Caco-2 (cell line): ENCODE measurements at regions of chr10 and their contacts with region 1.

Region 1: DNA sequence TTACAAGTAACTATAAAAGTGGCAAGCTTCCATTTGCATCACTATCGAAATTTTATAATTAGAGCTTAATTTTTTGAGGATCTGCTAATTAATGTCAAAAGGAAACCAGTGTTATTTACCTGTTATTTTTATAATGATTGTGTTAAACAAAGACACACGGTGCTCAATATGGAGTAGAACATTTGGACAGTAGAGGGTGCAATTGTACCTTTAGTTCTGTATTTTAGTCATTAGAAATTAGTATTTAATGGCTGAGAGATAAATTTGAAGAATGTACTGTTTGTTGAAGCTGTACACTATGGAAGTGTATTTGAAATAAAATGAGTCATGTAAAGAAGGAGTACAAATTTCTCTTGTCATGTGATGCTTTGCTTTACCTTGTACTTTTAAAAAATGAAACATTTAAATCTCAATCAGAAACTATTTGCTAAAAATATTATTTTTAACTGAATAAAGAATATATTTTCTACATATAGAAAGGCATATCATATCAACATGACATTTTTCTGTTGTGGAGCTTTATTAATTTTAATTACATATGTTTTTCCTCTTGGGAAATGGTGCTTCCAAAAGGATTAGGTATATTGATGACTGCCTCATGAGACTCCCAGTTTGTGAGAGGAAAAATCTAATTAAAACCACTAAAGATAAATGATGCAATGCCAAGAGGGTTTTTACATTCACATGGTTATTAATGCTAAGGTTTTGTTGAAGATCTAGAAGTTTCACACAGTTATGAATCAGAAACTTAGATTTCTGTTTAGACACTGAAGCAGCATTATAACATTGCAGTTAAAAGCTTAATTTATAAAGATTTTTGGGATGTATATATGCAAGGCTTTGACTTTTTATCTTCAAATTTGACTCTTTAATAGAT is 10.4 kb upstream of the PRKG1 start:
- DNase-seq: peak in 1 of 2 experiments; percentile 46
- H3K4me3 ChIP-seq: no peak overlapping the region
- H3K4me3 Mint-ChIP-seq: no peak overlapping the region
- H3K27ac Mint-ChIP-seq: no peak overlapping the region
- H3K4me1 ChIP-seq: no peaks in the 10 kb centered on the region
- H3K4me1 Mint-ChIP-seq: no peaks in the 10 kb centered on the region
- H3K27me3 ChIP-seq: no peaks in the 10 kb centered on the region
- H3K27me3 Mint-ChIP-seq: peaks cover 10% of the 10 kb centered on the region
- CTCF ChIP-seq: peak; percentile 61 to 73

Region 2: GRCh38 chr10:51029172-51029641 is 34.7 kb before region 1 on chr10:
- CTCF ChIA-PET with region 1: no interaction called
- POLR2A ChIA-PET with region 1: no interaction called
- intact Hi-C with region 1: no loop called
- DNase-seq: no peak
- H3K4me3 ChIP-seq: no peak overlapping the region
- H3K4me3 Mint-ChIP-seq: no peak overlapping the region
- H3K27ac Mint-ChIP-seq: no peak overlapping the region
- H3K4me1 ChIP-seq: no peaks in the 10 kb centered on the region
- H3K4me1 Mint-ChIP-seq: no peaks in the 10 kb centered on the region
- H3K27me3 ChIP-seq: no peaks in the 10 kb centered on the region
- H3K27me3 Mint-ChIP-seq: peaks cover 2% of the 10 kb centered on the region
- CTCF ChIP-seq: no peak

Region 3: DNA sequence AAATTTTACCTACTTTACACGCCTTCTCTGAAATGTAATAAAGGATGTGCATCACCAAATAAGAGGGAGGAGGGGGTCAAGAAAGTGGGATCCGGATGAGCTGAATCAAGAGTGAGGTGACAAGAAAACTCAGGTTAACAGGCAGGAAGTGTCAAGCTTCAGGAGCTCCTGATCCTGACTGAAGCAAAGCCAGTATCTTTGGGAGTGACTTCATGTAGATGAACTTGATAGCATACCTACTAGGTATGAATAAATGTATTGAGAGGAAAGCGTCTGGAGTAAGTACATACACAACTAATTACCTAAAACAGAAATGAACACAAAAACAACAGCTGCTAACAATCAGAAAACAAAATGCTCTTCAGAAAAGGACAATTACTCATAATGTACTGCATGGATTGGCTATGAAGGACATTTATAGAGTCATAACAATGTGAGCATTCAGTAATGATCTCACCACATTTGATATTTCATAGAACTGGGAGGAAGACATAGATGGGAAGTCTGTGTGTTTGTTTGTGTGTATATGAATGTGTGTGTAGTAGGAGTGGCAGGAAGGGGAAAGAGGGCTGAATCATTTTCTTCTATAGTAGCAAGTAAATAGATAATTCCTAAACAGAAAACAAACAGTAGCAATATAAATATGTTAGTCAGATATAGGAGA is 39.8 kb after region 1 on chr10:
- CTCF ChIA-PET with region 1: no interaction called
- POLR2A ChIA-PET with region 1: no interaction called
- intact Hi-C with region 1: no loop called
- DNase-seq: no peak
- H3K4me3 ChIP-seq: no peak overlapping the region
- H3K4me3 Mint-ChIP-seq: no peak overlapping the region
- H3K27ac Mint-ChIP-seq: no peak overlapping the region
- H3K4me1 ChIP-seq: no peaks in the 10 kb centered on the region
- H3K4me1 Mint-ChIP-seq: no peaks in the 10 kb centered on the region
- H3K27me3 ChIP-seq: no peaks in the 10 kb centered on the region; the same call in 1 of the 2 replicates
- H3K27me3 Mint-ChIP-seq: peaks cover 19% of the 10 kb centered on the region
- CTCF ChIP-seq: no peak

Region 4: DNA sequence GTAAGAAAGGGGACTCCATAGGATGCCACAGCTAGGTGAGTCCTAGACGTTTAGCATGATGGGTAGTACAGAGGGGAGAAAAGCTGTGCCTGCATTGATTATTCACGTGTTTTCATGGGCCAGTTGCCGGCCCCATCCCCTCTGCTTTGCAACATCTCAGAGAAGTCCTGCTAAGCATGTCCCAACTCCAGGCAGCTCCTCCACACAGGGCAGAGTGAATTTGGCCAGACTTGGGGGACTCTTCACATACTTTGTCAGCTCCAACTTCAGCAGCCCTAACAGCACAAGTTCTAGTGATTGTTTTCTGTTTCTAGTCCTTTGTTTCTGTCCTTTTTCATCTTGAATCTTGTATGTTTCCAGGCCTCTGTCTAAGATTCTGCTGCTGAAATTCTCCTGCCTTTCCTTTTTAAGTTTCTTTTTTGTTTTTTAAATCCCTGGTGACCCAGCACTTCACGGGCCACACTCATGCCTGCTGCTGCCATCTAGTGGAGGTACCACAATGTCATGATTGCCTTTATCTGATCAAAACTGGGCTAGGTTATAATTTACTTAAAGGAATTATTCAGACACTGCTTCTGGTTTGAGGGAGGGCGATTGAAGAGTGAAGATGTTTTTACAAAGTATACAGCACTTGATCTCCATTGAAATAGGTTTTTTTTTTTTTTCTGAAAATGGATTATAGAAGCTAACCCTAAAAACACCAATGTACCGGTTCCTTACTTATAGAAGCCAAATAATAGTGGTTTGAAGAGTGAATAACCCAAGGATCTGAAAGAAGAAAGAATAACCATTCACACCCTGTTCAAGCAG is 358.6 kb after region 1 on chr10:
- CTCF ChIA-PET with region 1: no interaction called
- POLR2A ChIA-PET with region 1: no interaction called
- intact Hi-C with region 1: loop called (anchors 1 kb)
- DNase-seq: peak in 1 of 2 experiments; percentile 59
- H3K4me3 ChIP-seq: no peak overlapping the region
- H3K4me3 Mint-ChIP-seq: no peak overlapping the region
- H3K27ac Mint-ChIP-seq: no peak overlapping the region
- H3K4me1 ChIP-seq: no peaks in the 10 kb centered on the region
- H3K4me1 Mint-ChIP-seq: no peaks in the 10 kb centered on the region
- H3K27me3 ChIP-seq: no peaks in the 10 kb centered on the region
- H3K27me3 Mint-ChIP-seq: peaks cover 10% of the 10 kb centered on the region
- CTCF ChIP-seq: peak; percentile 75 to 88

Region 5: DNA sequence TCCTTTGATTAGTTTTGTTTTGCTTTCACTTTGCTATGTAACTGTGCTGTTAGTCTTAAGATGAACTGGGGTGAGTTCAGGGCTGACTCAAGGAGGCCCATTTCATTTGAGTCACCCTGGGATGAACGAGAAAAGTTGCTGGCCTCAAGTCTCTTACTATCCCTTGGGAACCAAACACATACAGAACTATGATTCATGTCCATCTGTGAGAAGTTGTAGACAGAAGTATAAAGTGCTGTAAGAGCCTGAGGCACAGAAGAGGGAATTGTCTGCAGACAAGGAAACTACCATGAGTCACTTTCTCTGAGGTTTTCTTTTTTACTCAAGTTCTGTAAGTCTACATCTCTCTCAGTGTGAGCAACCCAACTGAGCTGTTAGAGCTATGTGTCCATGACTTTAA is 815.3 kb after region 1 on chr10:
- CTCF ChIA-PET with region 1: no interaction called
- POLR2A ChIA-PET with region 1: no interaction called
- intact Hi-C with region 1: loop called (anchors 1 kb)
- DNase-seq: no peak
- H3K4me3 ChIP-seq: no peak overlapping the region
- H3K4me3 Mint-ChIP-seq: no peak overlapping the region
- H3K27ac Mint-ChIP-seq: no peak overlapping the region
- H3K4me1 ChIP-seq: no peaks in the 10 kb centered on the region
- H3K4me1 Mint-ChIP-seq: no peaks in the 10 kb centered on the region
- H3K27me3 ChIP-seq: no peaks in the 10 kb centered on the region
- H3K27me3 Mint-ChIP-seq: no peaks in the 10 kb centered on the region
- CTCF ChIP-seq: no peak

Region 6: GRCh38 chr10:51960494-51960895 is 896.6 kb after region 1 on chr10:
- CTCF ChIA-PET with region 1: no interaction called
- POLR2A ChIA-PET with region 1: no interaction called
- intact Hi-C with region 1: loop called (anchors 1 kb)
- DNase-seq: peak in 1 of 2 experiments; percentile 59
- H3K4me3 ChIP-seq: no peak overlapping the region
- H3K4me3 Mint-ChIP-seq: no peak overlapping the region
- H3K27ac Mint-ChIP-seq: no peak overlapping the region
- H3K4me1 ChIP-seq: no peaks in the 10 kb centered on the region
- H3K4me1 Mint-ChIP-seq: no peaks in the 10 kb centered on the region
- H3K27me3 ChIP-seq: no peaks in the 10 kb centered on the region
- H3K27me3 Mint-ChIP-seq: peaks cover 31% of the 10 kb centered on the region
- CTCF ChIP-seq: peak; percentile 73 to 78

Region 7: GRCh38 chr10:52004342-52004949 is 940.5 kb after region 1 on chr10:
- CTCF ChIA-PET with region 1: no interaction called
- POLR2A ChIA-PET with region 1: no interaction called
- intact Hi-C with region 1: loop called (anchors 1 kb)
- DNase-seq: peak in 1 of 2 experiments; percentile 62
- H3K4me3 ChIP-seq: no peak overlapping the region
- H3K4me3 Mint-ChIP-seq: no peak overlapping the region
- H3K27ac Mint-ChIP-seq: no peak overlapping the region
- H3K4me1 ChIP-seq: no peaks in the 10 kb centered on the region
- H3K4me1 Mint-ChIP-seq: peaks cover 6% of the 10 kb centered on the region
- H3K27me3 ChIP-seq: no peaks in the 10 kb centered on the region
- H3K27me3 Mint-ChIP-seq: no peaks in the 10 kb centered on the region
- CTCF ChIP-seq: peak; percentile 80 to 81